WTC11 (cell line): ENCODE measurements at regions of chr3 and their contacts with region 1.

Region 1: GRCh38 chr3:131794766-131795388 is 239.9 kb downstream of the CPNE4 start:
- DNase-seq: peak; percentile 37
- ATAC-seq: peak; percentile 89
- H3K4me3 Mint-ChIP-seq: no peak overlapping the region
- H3K27ac Mint-ChIP-seq: no peak overlapping the region
- H3K4me1 Mint-ChIP-seq: peaks cover 38% of the 10 kb centered on the region
- H3K27me3 Mint-ChIP-seq: peaks cover 15% of the 10 kb centered on the region
- CTCF ChIP-seq: peak; percentile 77

Region 2: DNA sequence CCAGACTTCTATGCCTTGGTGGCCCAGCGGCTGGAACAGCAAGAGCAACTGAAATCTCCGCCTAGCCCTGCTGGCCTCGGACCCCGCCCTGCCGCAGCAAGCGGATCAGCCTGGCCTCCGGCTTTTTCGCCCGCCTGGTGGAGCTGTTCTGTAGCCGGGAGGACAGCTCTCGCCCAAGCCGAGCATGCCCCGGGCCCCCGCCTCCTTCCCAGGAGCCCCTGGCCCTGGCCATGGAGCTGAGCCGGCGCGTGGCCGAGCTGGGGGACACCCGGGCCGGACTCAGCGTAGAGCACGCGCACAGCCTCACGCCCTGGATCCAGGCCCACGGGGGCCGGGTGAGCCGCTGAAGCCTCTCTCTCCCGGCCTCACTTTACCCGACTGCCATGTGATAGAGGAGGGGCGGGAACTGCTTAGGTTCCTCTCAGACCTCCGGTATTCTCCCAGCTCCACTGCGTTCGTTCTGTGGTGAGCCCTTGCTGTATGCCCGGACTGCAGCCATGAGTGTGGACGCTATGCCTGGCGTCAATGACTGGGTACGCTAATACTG is 268.0 kb before region 1 on chr3:
- CTCF ChIA-PET with region 1: interaction called, 10 read pairs
- POLR2A ChIA-PET with region 1: no interaction called
- DNase-seq: peak; percentile 91
- ATAC-seq: peak; percentile 99
- H3K4me3 Mint-ChIP-seq: peak overlapping the region; percentile 38; the same call in 1 of the 2 replicates
- H3K27ac Mint-ChIP-seq: no peak overlapping the region
- H3K4me1 Mint-ChIP-seq: no peaks in the 10 kb centered on the region
- H3K27me3 Mint-ChIP-seq: no peaks in the 10 kb centered on the region; the same call in 1 of the 2 replicates
- CTCF ChIP-seq: no peak

Region 3: DNA sequence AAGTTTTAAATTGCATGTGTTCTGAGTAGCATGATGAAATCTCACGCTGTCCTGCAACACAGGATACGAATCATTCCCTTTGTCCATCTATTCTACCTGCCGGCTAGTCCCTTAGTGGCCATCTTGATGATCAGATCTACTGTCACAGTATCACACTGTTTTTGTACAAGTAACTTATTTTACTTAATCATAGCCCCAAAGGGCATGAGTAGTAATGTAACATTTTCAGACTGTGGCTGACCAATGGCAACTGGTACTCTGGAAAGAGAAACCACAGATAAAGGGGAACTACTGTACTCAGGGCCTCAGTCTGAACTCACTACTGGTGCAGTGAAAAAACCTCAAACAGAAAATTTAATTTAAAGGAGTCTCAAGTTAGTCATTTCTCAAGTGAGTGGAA is 164.8 kb before region 1 on chr3:
- CTCF ChIA-PET with region 1: no interaction called
- POLR2A ChIA-PET with region 1: no interaction called
- DNase-seq: no peak
- ATAC-seq: no peak
- H3K4me3 Mint-ChIP-seq: no peak overlapping the region
- H3K27ac Mint-ChIP-seq: no peak overlapping the region
- H3K4me1 Mint-ChIP-seq: no peaks in the 10 kb centered on the region
- H3K27me3 Mint-ChIP-seq: no peaks in the 10 kb centered on the region
- CTCF ChIP-seq: no peak